ENCODE measurements at regions of chr10 and their contacts with region 1.

Region 1: GRCh38 chr10:4849555-4850242 is 23.7 kb downstream of the AKR1E2 start:
- DNase-seq: peak; percentile 79
- H3K4me3 ChIP-seq: no peak overlapping the region
- CTCF ChIP-seq: peak; percentile 99

Region 2: DNA sequence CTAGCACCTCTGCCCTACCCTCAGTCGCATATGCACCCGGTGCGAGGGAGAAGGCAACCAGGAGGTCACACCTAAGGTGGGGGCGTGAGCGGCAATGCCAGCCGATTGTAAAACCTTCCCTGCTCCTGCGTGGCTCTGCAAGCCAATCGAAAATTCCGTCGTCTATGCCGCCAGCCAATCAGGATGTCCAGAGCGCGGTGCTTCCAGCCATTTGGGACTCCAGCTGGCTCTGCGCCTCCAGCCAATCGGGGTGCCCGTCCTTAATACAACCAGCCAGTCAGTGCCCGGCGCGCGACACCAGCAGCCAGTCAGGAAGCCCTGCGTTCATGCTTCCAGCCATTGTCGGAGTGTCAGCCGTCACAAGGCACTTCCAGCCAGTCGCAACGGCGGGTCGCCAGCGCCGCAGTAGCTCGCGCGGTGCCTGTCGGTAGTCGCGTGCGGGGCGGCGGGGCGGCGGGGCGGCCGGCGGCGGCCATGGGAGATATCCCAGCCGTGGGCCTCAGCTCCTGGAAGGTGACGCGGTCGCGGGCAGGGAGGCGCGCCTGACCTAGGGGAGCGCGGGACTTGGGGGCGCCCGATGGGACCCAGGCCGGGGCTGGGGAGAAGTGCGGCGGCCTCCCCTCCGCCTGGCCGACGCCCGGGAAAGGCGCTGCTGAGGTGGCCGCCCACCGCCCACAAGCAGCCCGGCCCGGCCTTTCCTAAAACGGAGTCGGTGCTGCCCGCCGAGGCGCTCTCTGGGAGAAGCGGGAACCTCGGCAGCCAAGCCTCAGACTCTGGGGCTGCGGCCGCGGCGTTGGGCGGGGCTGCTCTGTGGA is 23.6 kb before region 1 on chr10 and contains the start of gene AKR1E2:
- CTCF ChIA-PET with region 1: interaction called, 68 read pairs
- POLR2A ChIA-PET with region 1: no interaction called
- DNase-seq: peak; percentile 55
- H3K4me3 ChIP-seq: peak within 1 kb of the TSS; percentile 59
- CTCF ChIP-seq: no peak

Region 3: GRCh38 chr10:4882704-4883078 is 33.0 kb after region 1 on chr10:
- CTCF ChIA-PET with region 1: interaction called, 14 read pairs
- POLR2A ChIA-PET with region 1: no interaction called
- DNase-seq: no peak
- H3K4me3 ChIP-seq: no peak overlapping the region
- CTCF ChIP-seq: no peak

Region 4: DNA sequence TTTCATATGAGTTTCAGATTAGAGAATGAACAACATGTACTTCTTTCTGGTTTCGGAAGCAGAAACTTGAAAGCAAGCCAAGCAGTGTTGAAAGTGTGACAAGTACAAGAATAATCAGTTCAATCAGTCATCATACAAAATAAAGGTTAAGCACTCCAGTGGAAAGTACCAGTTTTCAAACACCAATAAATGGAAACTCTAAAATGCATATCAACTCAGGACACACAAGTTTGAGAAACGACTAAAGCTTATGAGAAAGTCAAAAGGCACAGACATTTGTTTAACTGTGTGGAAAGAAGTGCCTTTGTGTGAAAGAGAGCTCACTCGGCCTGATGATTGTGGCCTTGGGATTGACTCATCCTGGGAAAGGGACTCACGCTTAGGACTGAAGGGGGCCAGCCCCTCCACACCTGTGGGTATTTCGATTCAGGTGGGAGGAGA is 52.9 kb after region 1 on chr10:
- CTCF ChIA-PET with region 1: no interaction called
- POLR2A ChIA-PET with region 1: no interaction called
- DNase-seq: no peak
- H3K4me3 ChIP-seq: no peak overlapping the region
- CTCF ChIP-seq: no peak

Region 5: GRCh38 chr10:5094265-5095205 is 244.8 kb after region 1 on chr10 and contains the start of gene AKR1C3:
- CTCF ChIA-PET with region 1: interaction called, 263 read pairs
- POLR2A ChIA-PET with region 1: no interaction called
- DNase-seq: no peak
- H3K4me3 ChIP-seq: peak within 1 kb of the TSS; percentile 35
- CTCF ChIP-seq: peak; percentile 50

Region 6: GRCh38 chr10:5305374-5305773 is 455.7 kb after region 1 on chr10:
- CTCF ChIA-PET with region 1: interaction called, 42 read pairs
- POLR2A ChIA-PET with region 1: no interaction called
- DNase-seq: no peak
- H3K4me3 ChIP-seq: no peak overlapping the region
- CTCF ChIP-seq: peak; percentile 29

Region 7: DNA sequence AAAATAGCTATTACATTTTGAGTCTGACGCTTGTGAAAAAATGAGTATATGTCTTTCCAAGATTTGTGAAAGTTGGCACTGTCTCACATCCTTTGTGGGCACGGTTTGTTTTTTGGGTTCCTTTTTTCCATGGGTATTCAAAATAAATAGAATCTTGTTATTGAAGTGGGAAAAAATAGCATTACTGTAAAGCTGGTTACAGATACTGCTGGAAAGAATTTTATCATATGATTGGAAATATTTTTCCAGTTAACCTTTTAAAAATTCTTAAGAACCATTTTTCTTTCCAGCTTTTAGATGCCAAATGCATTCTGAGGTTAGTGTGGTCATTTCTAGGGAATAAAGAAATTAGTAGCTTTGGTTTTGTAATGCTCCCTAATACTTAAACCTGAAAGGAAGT is 574.1 kb after region 1 on chr10:
- CTCF ChIA-PET with region 1: interaction called, 18 read pairs
- POLR2A ChIA-PET with region 1: no interaction called
- DNase-seq: no peak
- H3K4me3 ChIP-seq: no peak overlapping the region
- CTCF ChIP-seq: no peak